ENCODE measurements at regions of chr7 and their contacts with region 1.

Region 1: GRCh38 chr7:100874577-100875355 is at the start of gene SRRT:
- DNase-seq: peak; percentile 82
- H3K4me3 ChIP-seq: peak within 1 kb of the TSS; percentile 91
- CTCF ChIP-seq: peak; percentile 33

Region 2: GRCh38 chr7:100889761-100890634 is 15.2 kb after region 1 on chr7:
- CTCF ChIA-PET with region 1: interaction called, 17 read pairs
- POLR2A ChIA-PET with region 1: interaction called, 40 read pairs
- DNase-seq: no peak
- H3K4me3 ChIP-seq: peak overlapping the region; percentile 63
- CTCF ChIP-seq: no peak

Region 3: DNA sequence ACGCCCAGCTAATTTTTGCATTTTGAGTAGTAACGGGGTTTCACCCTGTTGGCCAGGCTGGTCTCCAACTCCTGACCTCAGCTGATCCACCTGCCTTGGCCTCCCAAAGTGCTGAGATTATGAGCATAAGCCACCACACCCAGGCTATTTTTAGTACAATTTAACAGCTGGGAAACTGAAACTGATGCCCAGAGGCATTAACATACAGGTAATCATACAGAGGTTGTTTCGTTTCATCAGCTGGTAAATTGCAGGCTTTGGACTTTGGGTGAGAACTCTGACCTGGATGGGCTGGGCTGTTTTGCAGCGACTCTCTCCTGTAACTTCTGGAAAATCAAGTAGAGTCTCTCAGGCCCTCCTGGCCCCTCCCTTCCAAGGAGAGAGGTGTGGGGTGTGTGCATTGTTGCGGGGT is 27.2 kb after region 1 on chr7:
- CTCF ChIA-PET with region 1: no interaction called
- POLR2A ChIA-PET with region 1: no interaction called
- DNase-seq: no peak
- H3K4me3 ChIP-seq: no peak overlapping the region
- CTCF ChIP-seq: no peak